Sigmoid colon (tissue), 7 donors: ENCODE measurements at regions of chr3 and their contacts with region 1.

Region 1: DNA sequence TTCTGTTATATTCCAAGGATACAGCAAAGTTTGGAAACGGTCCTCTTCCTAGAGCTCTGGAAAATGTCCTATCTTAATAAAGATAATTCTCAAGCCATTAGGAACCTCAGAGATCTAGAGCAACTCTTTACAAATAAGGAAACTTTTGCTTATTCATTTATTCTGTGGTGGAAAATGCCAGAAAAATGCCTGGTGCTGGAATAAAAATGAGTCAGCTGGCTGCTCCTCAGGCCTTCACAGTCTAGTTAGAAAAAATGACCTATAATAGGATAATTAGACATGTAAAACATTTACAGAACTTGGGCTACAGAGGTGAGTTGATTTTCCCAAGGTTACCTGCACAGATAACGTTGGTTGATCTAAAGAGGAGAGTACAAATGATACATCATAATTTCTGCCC is 372.5 kb downstream of the NLGN1 start:
- DNase-seq: no peak
- H3K4me3 ChIP-seq: no peak overlapping the region
- H3K27ac ChIP-seq: no peak overlapping the region
- H3K4me1 ChIP-seq: no peaks in the 10 kb centered on the region
- H3K27me3 ChIP-seq: no peaks in the 10 kb centered on the region
- CTCF ChIP-seq: no peak
- EP300 ChIP-seq: no peak
- POLR2A ChIP-seq: no peak

Region 2: DNA sequence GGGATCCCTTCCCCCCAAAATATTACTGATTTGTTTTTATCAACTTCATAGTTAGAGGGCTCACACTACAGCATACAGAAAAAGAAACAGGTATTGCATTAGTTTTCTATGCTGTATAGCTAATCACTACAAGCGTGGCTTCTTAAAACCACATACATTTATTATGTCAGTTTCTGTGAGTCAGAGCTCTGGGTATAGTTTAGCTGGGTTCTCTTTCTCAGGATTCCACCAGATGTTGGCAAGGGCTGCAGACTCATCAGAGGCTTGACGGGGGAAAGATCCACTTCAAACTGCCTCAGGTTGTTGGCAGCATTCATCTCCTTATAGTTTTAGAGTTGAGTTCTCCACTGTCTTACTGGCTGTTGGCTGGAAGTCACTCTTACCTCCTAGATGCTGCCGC is 44.5 kb before region 1 on chr3:
- intact Hi-C with region 1: loop called (anchors 2 kb)
- DNase-seq: no peak
- H3K4me3 ChIP-seq: no peak overlapping the region
- H3K27ac ChIP-seq: no peak overlapping the region
- H3K4me1 ChIP-seq: no peaks in the 10 kb centered on the region
- H3K27me3 ChIP-seq: no peaks in the 10 kb centered on the region
- CTCF ChIP-seq: no peak
- EP300 ChIP-seq: no peak
- POLR2A ChIP-seq: no peak